Aorta (tissue), 5 donors: ENCODE measurements at regions of chr17 and their contacts with region 1.

Region 1: GRCh38 chr17:8294814-8295316 is 335 bp downstream of the SLC25A35 start:
- DNase-seq: no peak
- ATAC-seq: peak; percentile 21
- H3K4me3 ChIP-seq: no peak overlapping the region
- H3K27ac ChIP-seq: peak overlapping the region in 1 of 2 donors; percentile 34
- H3K4me1 ChIP-seq: no peaks in the 10 kb centered on the region
- H3K27me3 ChIP-seq: no peaks in the 10 kb centered on the region

Region 2: DNA sequence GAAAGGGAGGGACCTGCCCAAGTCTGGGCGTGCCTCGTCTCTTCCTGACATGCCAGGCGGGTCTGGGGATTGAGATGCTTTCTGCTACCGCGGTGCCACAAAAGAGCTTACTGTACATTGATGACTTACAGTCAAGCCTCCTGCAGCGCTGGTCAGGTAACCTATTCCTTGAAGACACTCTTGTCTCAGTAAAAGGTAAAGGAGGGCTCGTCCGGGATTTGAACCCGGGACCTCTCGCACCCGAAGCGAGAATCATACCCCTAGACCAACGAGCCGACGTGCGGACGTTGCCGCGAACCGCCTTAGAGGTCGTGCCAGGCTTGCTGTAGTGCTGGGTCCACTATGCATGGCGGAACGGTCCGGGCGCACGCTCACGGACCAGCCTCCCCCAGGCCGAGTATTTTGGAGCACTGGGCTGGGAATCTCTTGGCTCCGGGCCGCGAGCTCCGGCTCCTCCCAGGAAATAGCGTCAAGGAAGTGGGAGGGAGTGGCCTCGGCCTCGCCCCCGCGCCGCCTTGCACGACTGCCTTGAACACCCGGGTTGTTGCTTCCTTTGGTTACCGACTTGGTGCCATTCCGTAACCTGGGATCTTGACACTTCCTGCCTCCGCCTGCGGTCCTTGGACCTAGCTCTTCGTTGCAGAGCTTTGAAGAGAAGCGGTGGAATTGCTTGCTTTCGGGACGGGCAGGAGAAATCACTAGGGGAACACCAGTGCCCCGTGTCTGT is 72.1 kb before region 1 on chr17:
- intact Hi-C with region 1: loop called in 1 of 2 experiments (anchors 2 kb)
- DNase-seq: peak; percentile 97
- ATAC-seq: peak; percentile 88
- H3K4me3 ChIP-seq: peak overlapping the region; percentile 48 to 62
- H3K27ac ChIP-seq: peak overlapping the region; percentile 40 to 95
- H3K4me1 ChIP-seq: no peaks in the 10 kb centered on the region
- H3K27me3 ChIP-seq: no peaks in the 10 kb centered on the region

Region 3: GRCh38 chr17:8248751-8249607 is 45.9 kb before region 1 on chr17 and contains the start of gene PFAS:
- intact Hi-C with region 1: loop called in 1 of 2 experiments (anchors 2 kb)
- DNase-seq: peak; percentile 97 to 99
- ATAC-seq: peak; percentile 93
- H3K4me3 ChIP-seq: peak within 1 kb of the TSS; percentile 78 to 80
- H3K27ac ChIP-seq: peak within 1 kb of the TSS; percentile 32 to 85
- H3K4me1 ChIP-seq: no peaks in the 10 kb centered on the region
- H3K27me3 ChIP-seq: no peaks in the 10 kb centered on the region
- total RNA-seq, gene PFAS: 21.3 to 25.4 TPM